Panc1 (cell line): ENCODE measurements at regions of chr1 and their contacts with region 1.

Region 1: DNA sequence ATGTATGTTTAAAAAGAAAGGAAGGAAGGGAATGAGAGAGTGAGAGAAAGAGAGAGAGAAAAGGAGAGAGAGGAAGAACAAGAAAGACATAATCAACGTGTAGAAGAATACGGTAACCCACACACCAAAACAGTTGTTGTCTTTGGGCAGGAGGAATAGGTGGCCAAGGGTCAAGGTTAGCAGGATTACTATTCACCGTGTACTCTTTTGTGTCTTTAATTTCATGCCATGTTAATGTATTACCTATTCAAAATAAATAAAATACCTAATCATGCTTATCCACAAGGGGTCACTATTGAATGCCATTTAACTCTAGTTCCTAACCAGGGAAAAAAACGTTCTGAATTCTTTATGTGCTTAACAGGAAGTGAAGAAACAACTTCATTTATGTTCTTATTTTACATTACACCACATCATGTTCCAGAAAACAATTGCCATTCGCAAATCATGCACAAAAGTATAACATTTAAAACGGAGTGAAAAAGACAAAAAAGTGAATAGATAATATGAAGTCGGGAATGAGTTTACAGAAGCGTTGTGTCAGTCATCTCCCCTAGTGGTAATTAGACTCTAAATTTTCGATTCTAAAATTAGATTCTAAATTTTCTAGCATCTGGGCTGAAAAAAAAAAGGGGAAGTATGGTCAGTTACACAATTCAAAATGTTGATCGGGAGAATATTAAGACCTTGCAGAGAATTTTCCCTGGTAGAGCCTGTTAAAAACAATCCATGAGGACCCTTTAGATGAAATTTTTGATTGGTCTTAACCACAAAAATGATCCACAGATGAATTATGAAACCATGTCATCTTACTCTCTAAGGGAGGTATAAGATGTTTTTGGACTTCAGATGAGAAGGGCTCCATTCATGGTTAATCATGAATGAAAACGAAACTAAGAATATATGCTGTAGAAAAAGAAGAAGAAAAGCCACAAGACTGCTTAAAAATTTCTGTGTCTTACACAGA is 700 bp upstream of the KMO start:
- DNase-seq: peak; percentile 76
- ATAC-seq: peak; percentile 90
- H3K4me3 ChIP-seq: peak overlapping the region; percentile 50 to 56
- H3K27ac ChIP-seq: peak overlapping the region; percentile 91
- H3K4me1 ChIP-seq: peaks cover 3% of the 10 kb centered on the region
- H3K27me3 ChIP-seq: no peaks in the 10 kb centered on the region
- CTCF ChIP-seq: peak; percentile 63; the same call in 1 of the 2 replicates

Region 2: GRCh38 chr1:241627453-241628259 is 96.2 kb after region 1 on chr1:
- CTCF ChIA-PET with region 1: interaction called, 3 read pairs
- POLR2A ChIA-PET with region 1: no interaction called
- in situ Hi-C with region 1: no loop called
- intact Hi-C with region 1: loop called (anchors 1 kb)
- DNase-seq: no peak
- ATAC-seq: peak; percentile 80
- H3K4me3 ChIP-seq: no peak overlapping the region
- H3K27ac ChIP-seq: peak overlapping the region; percentile 57
- H3K4me1 ChIP-seq: peaks cover 11% of the 10 kb centered on the region; the same call in 1 of the 2 replicates
- H3K27me3 ChIP-seq: no peaks in the 10 kb centered on the region
- CTCF ChIP-seq: peak; percentile 66; the same call in 1 of the 2 replicates

Region 3: GRCh38 chr1:241834733-241835377 is 303.4 kb after region 1 on chr1:
- CTCF ChIA-PET with region 1: no interaction called
- POLR2A ChIA-PET with region 1: no interaction called
- in situ Hi-C with region 1: no loop called
- intact Hi-C with region 1: loop called (anchors 1 kb)
- DNase-seq: peak; percentile 18
- ATAC-seq: 0 out of 2 replicates have a peak, but pooled peaks have one; percentile 72
- H3K4me3 ChIP-seq: no peak overlapping the region
- H3K27ac ChIP-seq: no peak overlapping the region
- H3K4me1 ChIP-seq: no peaks in the 10 kb centered on the region
- H3K27me3 ChIP-seq: no peaks in the 10 kb centered on the region
- CTCF ChIP-seq: peak; percentile 76; the same call in 1 of the 2 replicates